ENCODE measurements at regions of chr2 and their contacts with region 1.

Region 1: DNA sequence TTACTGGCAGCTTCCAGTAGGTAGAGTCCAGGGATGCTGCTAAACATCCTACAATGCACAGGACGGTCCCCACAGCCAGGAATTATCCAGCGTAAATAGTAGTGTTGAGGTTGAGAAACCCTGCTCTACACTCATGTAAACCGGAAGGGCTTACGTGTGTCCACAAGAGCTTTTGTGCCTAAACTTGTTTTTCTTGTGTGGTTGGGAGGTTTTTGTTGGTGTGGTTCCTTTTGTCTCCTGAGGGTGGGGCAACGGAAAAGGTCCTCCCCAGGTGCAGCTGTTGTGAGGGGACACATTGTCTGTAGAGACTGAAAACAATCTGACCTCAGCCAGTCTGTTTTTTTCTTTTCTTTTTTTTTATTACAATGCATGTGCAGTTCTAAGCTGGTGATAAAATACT is 72.7 kb upstream of the MGAT5 start:
- DNase-seq: peak; percentile 16 to 81 (median 75)
- H3K4me3 ChIP-seq: no peak overlapping the region
- H3K4me3 Mint-ChIP-seq: peak overlapping the region in 6 of 7 donors; percentile 5 to 72 (median 50)
- H3K27ac ChIP-seq: no peak overlapping the region
- H3K27ac Mint-ChIP-seq: peak overlapping the region; percentile 72 to 96 (median 92)
- H3K4me1 ChIP-seq: peaks cover 60% of the 10 kb centered on the region
- H3K4me1 Mint-ChIP-seq: peaks cover 87 to 98% (median 95%) of the 10 kb centered on the region in 3 donors
- H3K27me3 ChIP-seq: no peaks in the 10 kb centered on the region
- H3K27me3 Mint-ChIP-seq: no peaks in the 10 kb centered on the region

Region 2: DNA sequence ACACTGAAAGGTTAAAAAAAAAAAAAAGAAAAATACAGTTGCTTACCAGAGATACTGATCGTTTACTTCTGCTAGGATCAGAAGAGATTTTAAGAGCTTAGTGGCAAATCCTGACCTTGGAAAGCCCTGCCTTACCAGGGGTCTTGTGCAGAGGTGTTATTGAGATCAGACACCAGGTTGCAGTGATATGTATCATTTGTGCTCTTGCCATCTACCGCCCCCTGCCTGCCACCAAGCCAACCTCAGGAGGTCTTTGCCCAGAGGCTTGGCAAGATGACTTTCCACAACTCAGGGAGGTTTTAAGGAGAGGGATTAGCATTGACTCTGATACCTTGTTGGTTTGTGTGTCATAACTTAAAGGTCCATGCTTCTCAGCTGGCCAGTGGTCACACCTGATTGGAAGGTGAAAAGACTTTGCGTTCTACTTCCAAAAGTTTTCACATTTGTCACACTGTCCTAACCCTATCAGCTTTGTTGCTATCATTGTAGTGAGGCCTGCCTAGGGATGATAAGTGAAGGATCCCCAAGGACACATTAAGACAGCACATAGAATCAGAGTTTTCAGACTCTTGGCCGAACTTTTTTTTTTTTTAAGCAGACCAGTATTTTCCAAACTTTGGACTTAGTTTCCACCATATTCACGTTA is 26.5 kb after region 1 on chr2:
- CTCF ChIA-PET with region 1: interaction called, 10 read pairs
- POLR2A ChIA-PET with region 1: interaction called, 3 read pairs
- DNase-seq: peak; percentile 45 to 73 (median 47)
- H3K4me3 ChIP-seq: no peak overlapping the region
- H3K4me3 Mint-ChIP-seq: peak overlapping the region in 1 of 7 donors; percentile 23
- H3K27ac ChIP-seq: no peak overlapping the region
- H3K27ac Mint-ChIP-seq: peak overlapping the region; percentile 6 to 66 (median 28)
- H3K4me1 ChIP-seq: peaks cover 34% of the 10 kb centered on the region
- H3K4me1 Mint-ChIP-seq: peaks cover 13 to 15% (median 15%) of the 10 kb centered on the region in 3 donors
- H3K27me3 ChIP-seq: no peaks in the 10 kb centered on the region
- H3K27me3 Mint-ChIP-seq: no peaks in the 10 kb centered on the region

Region 3: GRCh38 chr2:134233728-134234136 is 52.5 kb after region 1 on chr2:
- CTCF ChIA-PET with region 1: no interaction called
- POLR2A ChIA-PET with region 1: no interaction called
- DNase-seq: no peak
- H3K4me3 ChIP-seq: no peak overlapping the region
- H3K4me3 Mint-ChIP-seq: peak overlapping the region; percentile 15 to 88 (median 70)
- H3K27ac ChIP-seq: no peak overlapping the region
- H3K27ac Mint-ChIP-seq: peak overlapping the region; percentile 72 to 98 (median 90)
- H3K4me1 ChIP-seq: peaks cover 63% of the 10 kb centered on the region
- H3K4me1 Mint-ChIP-seq: peaks cover 85 to 95% (median 87%) of the 10 kb centered on the region in 3 donors
- H3K27me3 ChIP-seq: no peaks in the 10 kb centered on the region
- H3K27me3 Mint-ChIP-seq: no peaks in the 10 kb centered on the region